ENCODE measurements at regions of chr1 and their contacts with region 1.

Region 1: GRCh38 chr1:114660224-114660623 is 9.6 kb downstream of the DENND2C start:
- DNase-seq: no peak
- ATAC-seq: no peak
- H3K4me3 Mint-ChIP-seq: no peak overlapping the region
- H3K27ac Mint-ChIP-seq: no peak overlapping the region
- H3K4me1 Mint-ChIP-seq: no peaks in the 10 kb centered on the region
- H3K27me3 Mint-ChIP-seq: peaks cover 2% of the 10 kb centered on the region
- CTCF ChIP-seq: no peak

Region 2: DNA sequence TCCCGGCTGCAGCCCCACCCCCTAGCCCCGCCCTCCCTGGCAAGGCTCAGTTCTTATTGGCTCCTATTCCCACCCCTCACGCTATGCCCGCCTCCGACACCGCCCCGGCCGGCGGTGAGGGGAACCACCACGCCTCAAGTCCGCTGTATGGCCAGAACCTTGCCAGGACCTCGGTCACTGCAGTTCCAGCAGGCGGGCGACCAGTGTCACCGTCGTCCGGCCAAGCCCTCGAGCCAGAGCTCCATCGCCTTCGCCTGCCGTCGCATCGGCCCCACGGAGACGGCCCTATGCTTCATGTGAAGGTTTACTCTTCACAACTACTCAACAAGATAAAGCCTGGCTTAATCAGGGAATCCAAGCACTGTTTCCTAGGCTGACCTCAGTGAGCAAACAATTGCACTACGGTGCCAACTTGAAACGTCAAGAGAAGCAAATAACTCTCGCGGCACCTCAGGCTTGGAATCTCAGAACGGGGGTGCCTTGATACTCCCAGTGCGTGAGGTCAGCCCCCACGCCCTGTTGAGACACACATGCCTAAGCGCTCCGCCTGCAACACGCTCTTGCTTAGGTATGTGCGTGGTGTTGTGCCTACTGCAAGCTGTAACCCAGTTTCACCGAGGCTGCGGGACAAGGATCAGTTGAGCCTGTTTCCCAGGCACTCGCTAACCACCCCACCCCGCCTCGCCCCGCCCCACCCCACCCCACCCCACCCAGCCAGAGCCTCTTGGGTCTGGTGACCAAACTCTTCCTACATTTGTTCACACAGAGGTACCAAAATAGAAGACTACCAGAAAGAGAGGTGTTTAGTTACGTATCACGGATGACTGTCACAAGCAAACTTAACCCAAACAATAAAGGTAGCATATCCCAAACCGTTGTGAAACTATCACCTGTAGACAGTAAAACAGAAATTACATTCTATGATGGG is 10.1 kb after region 1 on chr1:
- CTCF ChIA-PET with region 1: interaction called, 13 read pairs
- POLR2A ChIA-PET with region 1: interaction called, 6 read pairs
- intact Hi-C with region 1: no loop called
- DNase-seq: peak; percentile 92
- ATAC-seq: peak; percentile 97
- H3K4me3 Mint-ChIP-seq: peak overlapping the region; percentile 86
- H3K27ac Mint-ChIP-seq: peak overlapping the region; percentile 68
- H3K4me1 Mint-ChIP-seq: peaks cover 10% of the 10 kb centered on the region
- H3K27me3 Mint-ChIP-seq: peaks cover 7% of the 10 kb centered on the region
- CTCF ChIP-seq: no peak